HCT116 (cell line): ENCODE measurements at regions of chr18 and their contacts with region 1.

Region 1: GRCh38 chr18:46148810-46149209 is 44.6 kb downstream of the HAUS1 start:
- DNase-seq: no peak
- ATAC-seq: peak; percentile 65
- H3K4me3 ChIP-seq: no peak overlapping the region
- H3K27ac ChIP-seq: no peak overlapping the region
- H3K4me1 ChIP-seq: peaks cover 20 to 28% of the 10 kb centered on the region in 2 experiments
- H3K27me3 ChIP-seq: no peaks in the 10 kb centered on the region
- CTCF ChIP-seq: peak; percentile 57 to 85 (median 78)
- POLR2A ChIP-seq: no peak
- RAD21 ChIP-seq: peak; percentile 85

Region 2: GRCh38 chr18:46213295-46213694 is 64.5 kb after region 1 on chr18:
- CTCF ChIA-PET with region 1: no interaction called
- POLR2A ChIA-PET with region 1: interaction called, 3 read pairs
- RAD21 ChIA-PET with region 1: no interaction called
- intact Hi-C with region 1: loop called (anchors 1 kb)
- DNase-seq: peak; percentile 21
- ATAC-seq: peak; percentile 52; the same call in 1 of the 2 replicates
- H3K4me3 ChIP-seq: no peak overlapping the region
- H3K27ac ChIP-seq: no peak overlapping the region
- H3K4me1 ChIP-seq: no peaks in the 10 kb centered on the region
- H3K27me3 ChIP-seq: no peaks in the 10 kb centered on the region
- CTCF ChIP-seq: peak; percentile 45 to 76 (median 65)
- POLR2A ChIP-seq: no peak
- RAD21 ChIP-seq: peak; percentile 69